Activated CD4-positive, alpha-beta memory T cell treated with anti-CD3 and anti-CD28 coated beads, Interleukin-2, amount 10 ng/mL, durations not matched to agents 7 days and 5 days (primary cell): ENCODE measurements at regions of chr6 and their contacts with region 1.

Region 1: DNA sequence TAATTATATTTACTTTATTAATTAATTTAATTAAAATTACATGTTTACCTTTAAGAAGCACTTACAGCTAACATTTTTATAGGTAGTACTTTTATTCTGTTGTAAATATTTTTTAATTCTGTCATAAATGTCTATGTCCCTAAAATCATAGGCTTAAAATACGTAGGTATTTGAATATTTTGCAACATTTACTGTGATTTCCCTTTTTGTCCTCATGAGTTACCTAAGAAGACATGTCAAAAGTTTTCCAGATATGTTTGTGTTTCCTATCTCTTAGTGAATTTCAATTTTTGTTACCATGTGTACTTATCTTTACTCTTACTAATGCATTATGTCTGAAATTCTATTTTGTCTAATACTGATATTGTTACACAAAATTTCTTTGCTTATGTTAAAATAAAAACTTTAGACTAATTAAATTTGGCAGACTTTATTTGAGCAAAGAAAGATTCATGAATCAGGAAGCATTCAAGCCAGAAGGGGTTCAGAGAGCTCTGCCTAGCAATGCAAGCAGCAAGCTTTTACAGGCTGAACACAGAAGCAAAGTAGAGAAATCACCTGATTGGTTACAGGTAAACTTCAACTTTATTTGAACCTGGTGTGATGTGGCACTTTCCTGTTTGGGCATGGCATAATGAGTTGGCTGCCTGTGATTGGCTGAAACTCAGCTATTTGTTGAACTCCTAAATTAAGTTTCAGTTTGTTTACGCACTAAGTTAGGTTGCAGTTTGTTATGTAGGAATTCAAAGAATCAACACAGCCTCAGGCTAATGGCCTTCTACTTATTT is 123.2 kb upstream of the TMEM170B start:
- DNase-seq: peak; percentile 76
- H3K4me3 Mint-ChIP-seq: peak overlapping the region; percentile 8
- H3K27ac Mint-ChIP-seq: peak overlapping the region; percentile 59
- H3K4me1 Mint-ChIP-seq: peaks cover 55% of the 10 kb centered on the region
- H3K27me3 Mint-ChIP-seq: no peaks in the 10 kb centered on the region

Region 2: GRCh38 chr6:11311970-11312369 is 102.4 kb before region 1 on chr6:
- CTCF ChIA-PET with region 1: no interaction called
- POLR2A ChIA-PET with region 1: no interaction called
- DNase-seq: no peak
- H3K4me3 Mint-ChIP-seq: no peak overlapping the region
- H3K27ac Mint-ChIP-seq: no peak overlapping the region
- H3K4me1 Mint-ChIP-seq: peaks cover 21% of the 10 kb centered on the region
- H3K27me3 Mint-ChIP-seq: no peaks in the 10 kb centered on the region

Region 3: GRCh38 chr6:11366183-11366933 is 48.0 kb before region 1 on chr6:
- CTCF ChIA-PET with region 1: interaction called, 10 read pairs
- POLR2A ChIA-PET with region 1: interaction called, 17 read pairs
- DNase-seq: peak; percentile 64
- H3K4me3 Mint-ChIP-seq: peak overlapping the region; percentile 12
- H3K27ac Mint-ChIP-seq: peak overlapping the region; percentile 62
- H3K4me1 Mint-ChIP-seq: peaks cover 74% of the 10 kb centered on the region
- H3K27me3 Mint-ChIP-seq: no peaks in the 10 kb centered on the region

Region 4: DNA sequence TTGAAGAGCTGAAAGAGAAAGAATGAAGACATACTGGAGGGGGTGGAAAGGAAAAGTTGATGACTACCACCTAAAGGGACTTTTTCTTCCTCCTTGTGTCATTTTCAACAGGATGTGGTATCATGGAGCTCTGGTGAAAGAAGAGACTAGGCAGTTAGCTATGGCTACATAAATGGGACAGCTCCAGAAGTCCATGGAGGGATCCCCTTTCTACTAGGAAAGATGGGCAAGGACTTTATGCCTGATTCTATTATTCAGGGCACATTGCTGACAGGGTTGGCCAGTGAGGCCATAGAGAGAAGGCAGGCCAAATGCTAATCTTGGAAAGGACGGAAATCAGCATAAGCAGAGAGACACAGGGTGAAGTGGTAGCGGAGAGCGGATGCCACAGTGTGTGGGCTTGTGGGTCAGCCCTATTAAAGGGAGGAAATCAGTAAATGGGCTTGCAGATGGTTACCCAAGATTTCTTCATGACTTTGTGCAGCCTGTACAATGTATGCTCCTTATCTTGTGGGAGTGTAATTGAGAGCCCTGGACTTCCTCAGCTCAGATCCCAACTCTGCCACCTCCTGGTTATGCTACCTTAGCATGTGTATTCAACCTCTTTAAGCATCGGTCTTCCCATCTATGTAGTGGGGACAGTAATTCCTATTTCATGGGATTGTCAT is 45.8 kb after region 1 on chr6:
- CTCF ChIA-PET with region 1: no interaction called
- POLR2A ChIA-PET with region 1: no interaction called
- DNase-seq: peak; percentile 24
- H3K4me3 Mint-ChIP-seq: no peak overlapping the region
- H3K27ac Mint-ChIP-seq: peak overlapping the region; percentile 7
- H3K4me1 Mint-ChIP-seq: peaks cover 24% of the 10 kb centered on the region
- H3K27me3 Mint-ChIP-seq: no peaks in the 10 kb centered on the region